MCF 10A (cell line): ENCODE measurements at regions of chr11 and their contacts with region 1.

Region 1: GRCh38 chr11:66022401-66023185 is 3.7 kb downstream of the CATSPER1 start:
- DNase-seq: peak; percentile 58
- H3K4me3 Mint-ChIP-seq: peak overlapping the region; percentile 21
- H3K27ac Mint-ChIP-seq: no peak overlapping the region
- H3K4me1 Mint-ChIP-seq: peaks cover 6% of the 10 kb centered on the region
- H3K27me3 Mint-ChIP-seq: no peaks in the 10 kb centered on the region
- CTCF ChIP-seq: peak; percentile 94

Region 2: GRCh38 chr11:65833297-65834030 is 189.1 kb before region 1 on chr11 and contains the start of gene SNX32:
- CTCF ChIA-PET with region 1: no interaction called
- POLR2A ChIA-PET with region 1: no interaction called
- intact Hi-C with region 1: no loop called
- DNase-seq: no peak
- H3K4me3 Mint-ChIP-seq: no peak within 1 kb of the TSS
- H3K27ac Mint-ChIP-seq: no peak within 1 kb of the TSS
- H3K4me1 Mint-ChIP-seq: no peaks in the 10 kb centered on the region
- H3K27me3 Mint-ChIP-seq: peaks cover 40% of the 10 kb centered on the region
- CTCF ChIP-seq: no peak
- total RNA-seq, gene SNX32: not detected in 2 replicates

Region 3: GRCh38 chr11:65976216-65977176 is 46.1 kb before region 1 on chr11:
- CTCF ChIA-PET with region 1: no interaction called
- POLR2A ChIA-PET with region 1: no interaction called
- intact Hi-C with region 1: no loop called
- DNase-seq: no peak
- H3K4me3 Mint-ChIP-seq: no peak overlapping the region
- H3K27ac Mint-ChIP-seq: no peak overlapping the region
- H3K4me1 Mint-ChIP-seq: peaks cover 8% of the 10 kb centered on the region
- H3K27me3 Mint-ChIP-seq: no peaks in the 10 kb centered on the region
- CTCF ChIP-seq: no peak

Region 4: GRCh38 chr11:65988791-65989592 is 33.6 kb before region 1 on chr11:
- CTCF ChIA-PET with region 1: interaction called, 6 read pairs
- POLR2A ChIA-PET with region 1: no interaction called
- intact Hi-C with region 1: loop called (anchors 1 kb)
- DNase-seq: peak; percentile 96
- H3K4me3 Mint-ChIP-seq: no peak overlapping the region
- H3K27ac Mint-ChIP-seq: no peak overlapping the region
- H3K4me1 Mint-ChIP-seq: peaks cover 5% of the 10 kb centered on the region
- H3K27me3 Mint-ChIP-seq: no peaks in the 10 kb centered on the region
- CTCF ChIP-seq: peak; percentile 93

Region 5: DNA sequence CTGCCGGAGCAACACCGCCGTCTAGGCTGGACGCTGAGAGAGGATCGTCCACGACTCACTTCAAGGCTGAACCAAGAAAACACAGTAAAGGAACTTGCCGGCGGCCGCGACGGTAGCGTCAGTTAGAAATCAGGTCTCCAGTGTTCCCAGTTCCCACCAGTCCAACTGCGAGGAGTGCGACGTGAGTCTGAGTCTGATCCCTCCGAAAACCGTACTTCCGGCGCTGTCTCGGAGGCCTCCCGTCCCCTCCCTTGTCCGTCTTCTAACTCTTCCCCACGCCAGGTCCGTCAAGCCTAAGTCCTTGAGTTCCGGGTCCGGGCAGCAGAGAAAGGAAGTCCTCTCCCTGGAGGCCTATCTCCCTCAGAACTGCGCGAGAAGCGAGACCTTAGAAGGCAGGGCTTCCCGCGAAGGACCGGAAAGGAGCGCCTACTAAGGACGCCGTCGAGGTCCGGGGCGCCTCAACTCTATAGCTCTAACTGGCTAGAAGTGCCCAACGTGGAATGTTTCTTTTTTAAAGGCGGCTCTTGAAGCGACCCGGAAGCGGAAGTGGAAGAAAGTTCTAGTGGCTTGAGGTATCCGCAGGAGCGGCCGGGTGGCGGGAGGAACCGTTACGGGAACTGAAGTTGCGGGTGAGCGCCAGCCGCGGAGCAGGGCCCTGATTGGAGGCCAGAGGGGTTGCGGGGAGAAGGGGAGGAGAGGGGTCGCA is 20.5 kb before region 1 on chr11 and contains the starts of genes BANF1 and EIF1AD:
- CTCF ChIA-PET with region 1: interaction called, 31 read pairs
- POLR2A ChIA-PET with region 1: interaction called, 20 read pairs
- intact Hi-C with region 1: no loop called
- DNase-seq: peak; percentile 99
- H3K4me3 Mint-ChIP-seq: peak within 1 kb of the TSS; percentile 97
- H3K27ac Mint-ChIP-seq: peak within 1 kb of the TSS; percentile 96
- H3K4me1 Mint-ChIP-seq: no peaks in the 10 kb centered on the region
- H3K27me3 Mint-ChIP-seq: no peaks in the 10 kb centered on the region
- CTCF ChIP-seq: no peak
- total RNA-seq, gene BANF1: 154 and 198 TPM in 2 replicates
- total RNA-seq, gene EIF1AD: 21.7 and 33.5 TPM in 2 replicates

Region 6: DNA sequence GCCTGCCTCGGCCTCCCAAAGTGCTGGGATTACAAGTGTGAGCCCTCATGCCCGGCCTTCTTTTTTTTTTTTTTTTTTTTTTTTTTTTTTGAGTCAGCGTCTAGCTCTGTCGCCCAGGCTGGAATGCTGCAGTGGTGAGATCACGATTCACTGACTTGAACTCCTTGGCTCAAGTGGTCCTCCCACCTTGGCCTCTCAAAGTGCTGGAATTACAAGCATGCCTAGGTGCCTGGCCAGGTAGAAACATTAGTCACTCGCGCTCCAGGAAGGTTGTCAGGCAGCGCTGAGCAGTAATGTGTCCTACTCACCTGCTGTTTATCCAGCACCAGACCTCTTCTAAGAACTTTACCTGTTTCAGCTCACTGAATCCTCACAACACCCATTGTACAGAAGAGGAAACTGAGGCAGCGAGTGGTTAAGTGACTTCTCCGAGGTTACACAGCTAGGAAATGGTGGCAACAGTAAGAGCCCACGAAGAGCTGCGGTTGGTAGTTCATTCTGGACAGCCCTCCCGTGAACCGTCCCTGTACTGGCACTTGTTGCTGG is 11.3 kb before region 1 on chr11:
- CTCF ChIA-PET with region 1: interaction called, 31 read pairs
- POLR2A ChIA-PET with region 1: interaction called, 6 read pairs
- intact Hi-C with region 1: no loop called
- DNase-seq: peak; percentile 86
- H3K4me3 Mint-ChIP-seq: no peak overlapping the region
- H3K27ac Mint-ChIP-seq: peak overlapping the region; percentile 9
- H3K4me1 Mint-ChIP-seq: peaks cover 20% of the 10 kb centered on the region
- H3K27me3 Mint-ChIP-seq: no peaks in the 10 kb centered on the region
- CTCF ChIP-seq: no peak

Region 7: GRCh38 chr11:66035653-66036333 is 13.2 kb after region 1 on chr11:
- CTCF ChIA-PET with region 1: interaction called, 15 read pairs
- POLR2A ChIA-PET with region 1: no interaction called
- intact Hi-C with region 1: no loop called
- DNase-seq: no peak
- H3K4me3 Mint-ChIP-seq: no peak overlapping the region
- H3K27ac Mint-ChIP-seq: no peak overlapping the region
- H3K4me1 Mint-ChIP-seq: no peaks in the 10 kb centered on the region
- H3K27me3 Mint-ChIP-seq: peaks cover 17% of the 10 kb centered on the region
- CTCF ChIP-seq: no peak

Region 8: GRCh38 chr11:66045177-66045639 is 22.6 kb after region 1 on chr11:
- CTCF ChIA-PET with region 1: interaction called, 18 read pairs
- POLR2A ChIA-PET with region 1: no interaction called
- intact Hi-C with region 1: no loop called
- DNase-seq: peak; percentile 78
- H3K4me3 Mint-ChIP-seq: no peak overlapping the region
- H3K27ac Mint-ChIP-seq: no peak overlapping the region
- H3K4me1 Mint-ChIP-seq: no peaks in the 10 kb centered on the region
- H3K27me3 Mint-ChIP-seq: no peaks in the 10 kb centered on the region
- CTCF ChIP-seq: peak; percentile 86

Region 9: DNA sequence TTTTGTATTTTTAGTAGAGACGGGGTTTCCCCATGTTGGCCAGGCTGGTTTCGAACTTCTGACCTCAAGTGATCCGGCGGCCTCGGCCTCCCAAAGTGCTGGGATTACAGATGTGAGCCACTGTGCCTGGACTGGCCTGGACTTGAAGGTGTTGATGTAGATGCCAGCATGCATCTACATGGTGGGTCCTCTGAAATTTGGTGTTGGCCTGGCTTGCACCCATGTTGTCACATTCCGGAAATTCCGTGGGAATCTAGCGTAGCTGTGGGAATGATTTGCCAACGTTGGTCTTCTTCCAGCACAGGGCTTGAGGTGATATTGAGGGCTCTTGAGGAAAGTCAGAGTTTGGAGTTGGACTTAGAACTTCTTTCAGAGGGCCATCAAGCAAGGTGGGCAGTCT is 54.0 kb after region 1 on chr11:
- CTCF ChIA-PET with region 1: no interaction called
- POLR2A ChIA-PET with region 1: no interaction called
- intact Hi-C with region 1: no loop called
- DNase-seq: no peak
- H3K4me3 Mint-ChIP-seq: no peak overlapping the region
- H3K27ac Mint-ChIP-seq: no peak overlapping the region
- H3K4me1 Mint-ChIP-seq: peaks cover 36% of the 10 kb centered on the region
- H3K27me3 Mint-ChIP-seq: no peaks in the 10 kb centered on the region
- CTCF ChIP-seq: no peak

Region 10: DNA sequence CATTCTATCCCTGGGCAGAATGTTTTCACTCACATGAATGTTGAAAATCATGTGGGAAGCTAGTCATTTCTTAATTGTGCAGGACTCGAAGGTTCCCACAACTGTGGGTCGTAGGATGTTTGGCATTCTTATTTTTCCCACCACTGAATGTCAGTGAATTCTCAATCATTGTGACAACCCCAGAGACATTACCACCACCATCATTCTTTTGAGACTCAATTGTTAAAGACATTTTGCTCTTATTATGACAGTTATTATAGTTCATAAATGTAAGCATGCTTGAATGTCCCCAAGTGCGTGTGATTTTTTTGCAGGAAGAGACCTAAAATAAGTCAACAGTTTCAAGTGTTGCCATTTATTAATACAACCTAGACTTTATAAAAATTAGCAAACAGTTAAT is 66.5 kb after region 1 on chr11:
- CTCF ChIA-PET with region 1: no interaction called
- POLR2A ChIA-PET with region 1: no interaction called
- intact Hi-C with region 1: no loop called
- DNase-seq: no peak
- H3K4me3 Mint-ChIP-seq: no peak overlapping the region
- H3K27ac Mint-ChIP-seq: no peak overlapping the region
- H3K4me1 Mint-ChIP-seq: peaks cover 3% of the 10 kb centered on the region
- H3K27me3 Mint-ChIP-seq: no peaks in the 10 kb centered on the region
- CTCF ChIP-seq: no peak